ENCODE measurements at regions of chr12 and their contacts with region 1.

Region 1: GRCh38 chr12:6839482-6840201 is 1.1 kb upstream of the GNB3 start:
- DNase-seq: no peak
- H3K4me3 ChIP-seq: no peak overlapping the region
- H3K27ac ChIP-seq: no peak overlapping the region
- H3K4me1 ChIP-seq: no peaks in the 10 kb centered on the region
- H3K27me3 ChIP-seq: no peaks in the 10 kb centered on the region
- CTCF ChIP-seq: no peak
- EP300 ChIP-seq: no peak
- RAD21 ChIP-seq: no peak

Region 2: DNA sequence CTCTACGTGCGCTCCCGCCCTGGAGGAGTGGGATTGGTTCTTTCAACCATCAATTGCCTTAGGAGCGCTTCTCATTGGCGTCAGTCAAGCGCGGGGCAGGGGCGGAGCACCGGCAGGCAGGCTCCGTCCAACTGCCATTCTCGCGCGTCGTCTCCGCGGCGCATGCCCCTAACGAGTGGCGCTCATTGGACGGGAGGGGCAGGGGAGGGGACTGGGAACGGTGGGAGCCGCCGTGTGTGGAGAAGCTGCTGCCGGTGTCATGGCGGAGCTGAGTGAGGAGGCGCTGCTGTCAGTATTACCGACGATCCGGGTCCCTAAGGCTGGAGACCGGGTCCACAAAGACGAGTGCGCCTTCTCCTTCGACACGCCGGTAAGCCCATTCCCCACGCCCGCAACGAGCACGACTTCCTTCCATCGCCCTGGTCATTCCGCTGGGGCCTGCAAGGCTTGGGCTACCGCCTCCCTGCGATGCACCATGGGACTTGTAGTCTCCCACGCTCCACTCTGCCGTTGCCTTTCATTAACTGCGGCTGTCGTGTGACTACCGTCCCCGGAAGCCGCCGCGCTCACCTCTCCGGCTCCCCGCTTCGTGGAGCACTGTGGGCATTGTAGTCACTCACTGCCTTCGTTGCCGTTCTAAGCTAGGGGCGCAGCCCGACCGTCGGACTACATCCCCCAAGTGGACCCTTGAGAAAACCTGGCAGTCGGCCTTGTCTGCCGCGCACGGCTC is 12.4 kb after region 1 on chr12 and contains the start of gene USP5:
- CTCF ChIA-PET with region 1: interaction called, 225 read pairs
- POLR2A ChIA-PET with region 1: interaction called, 22 read pairs
- DNase-seq: peak; percentile 92
- H3K4me3 ChIP-seq: peak within 1 kb of the TSS; percentile 70 to 76
- H3K27ac ChIP-seq: peak within 1 kb of the TSS; percentile 73 to 97
- H3K4me1 ChIP-seq: peaks cover 7 to 17% of the 10 kb centered on the region in 2 experiments
- H3K27me3 ChIP-seq: no peaks in the 10 kb centered on the region
- CTCF ChIP-seq: 0 out of 2 replicates have a peak, but pooled peaks have one; percentile 7
- EP300 ChIP-seq: no peak
- RAD21 ChIP-seq: no peak
- polyA plus RNA-seq, gene USP5: 97.2 and 100 TPM in 2 replicates

Region 3: DNA sequence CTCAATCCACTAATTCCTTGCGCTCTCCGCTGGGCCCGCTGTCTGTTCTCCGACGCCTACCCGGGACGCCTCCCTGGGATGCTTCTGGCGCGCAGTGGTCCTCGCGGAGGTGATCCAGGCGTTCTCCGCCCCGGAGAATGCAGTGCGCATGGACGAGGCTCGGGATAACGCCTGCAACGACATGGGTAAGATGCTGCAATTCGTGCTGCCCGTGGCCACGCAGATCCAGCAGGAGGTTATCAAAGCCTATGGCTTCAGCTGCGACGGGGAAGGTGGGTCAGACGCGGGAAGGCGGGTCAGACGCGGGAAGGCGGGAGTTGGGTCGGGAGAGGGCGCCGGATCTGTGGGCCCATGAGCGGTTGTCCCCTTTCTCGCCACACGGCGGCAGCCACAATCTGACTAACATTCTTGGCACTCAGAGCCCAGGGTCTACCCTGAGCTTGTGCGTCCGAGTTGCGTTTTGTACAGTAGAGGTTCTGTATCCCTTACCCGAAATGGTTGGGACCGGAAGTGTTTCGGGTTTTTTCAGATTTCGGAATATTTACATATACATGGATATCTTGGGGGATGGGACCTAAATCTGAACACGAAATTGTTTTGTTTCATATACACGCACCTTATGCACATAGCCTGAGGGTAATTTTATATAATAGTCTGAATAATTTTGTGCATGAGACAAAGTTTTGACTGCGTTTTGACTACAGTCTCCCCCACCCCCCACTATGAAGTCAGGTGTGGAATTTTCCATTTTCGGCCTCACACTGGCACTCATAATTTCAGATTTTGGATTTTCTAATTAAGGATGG is 104.9 kb after region 1 on chr12:
- CTCF ChIA-PET with region 1: no interaction called
- POLR2A ChIA-PET with region 1: no interaction called
- DNase-seq: peak; percentile 93
- H3K4me3 ChIP-seq: peak overlapping the region; percentile 67 to 72
- H3K27ac ChIP-seq: peak overlapping the region; percentile 89 to 98
- H3K4me1 ChIP-seq: peaks cover 6 to 13% of the 10 kb centered on the region in 2 experiments; a peak in 3 of 4 replicates
- H3K27me3 ChIP-seq: no peaks in the 10 kb centered on the region
- CTCF ChIP-seq: peak; percentile 76
- EP300 ChIP-seq: no peak
- RAD21 ChIP-seq: peak; percentile 82

Region 4: GRCh38 chr12:7142056-7142644 is 302.5 kb after region 1 on chr12:
- CTCF ChIA-PET with region 1: no interaction called
- POLR2A ChIA-PET with region 1: no interaction called
- DNase-seq: peak; percentile 66
- H3K4me3 ChIP-seq: no peak overlapping the region; a peak in 1 of 4 replicates
- H3K27ac ChIP-seq: no peak overlapping the region
- H3K4me1 ChIP-seq: no peaks in the 10 kb centered on the region
- H3K27me3 ChIP-seq: no peaks in the 10 kb centered on the region
- CTCF ChIP-seq: peak; percentile 64
- EP300 ChIP-seq: no peak
- RAD21 ChIP-seq: peak; percentile 58